IMR-90 (cell line): ENCODE measurements at regions of chr13 and their contacts with region 1.

Region 1: GRCh38 chr13:37741536-37741935 is 128.0 kb downstream of the TRPC4 start:
- DNase-seq: no peak
- ATAC-seq: no peak
- H3K4me3 ChIP-seq: no peak overlapping the region
- H3K27ac ChIP-seq: no peak overlapping the region
- H3K4me1 ChIP-seq: no peaks in the 10 kb centered on the region
- H3K27me3 ChIP-seq: no peaks in the 10 kb centered on the region
- CTCF ChIP-seq: no peak
- POLR2A ChIP-seq: no peak
- RAD21 ChIP-seq: no peak

Region 2: DNA sequence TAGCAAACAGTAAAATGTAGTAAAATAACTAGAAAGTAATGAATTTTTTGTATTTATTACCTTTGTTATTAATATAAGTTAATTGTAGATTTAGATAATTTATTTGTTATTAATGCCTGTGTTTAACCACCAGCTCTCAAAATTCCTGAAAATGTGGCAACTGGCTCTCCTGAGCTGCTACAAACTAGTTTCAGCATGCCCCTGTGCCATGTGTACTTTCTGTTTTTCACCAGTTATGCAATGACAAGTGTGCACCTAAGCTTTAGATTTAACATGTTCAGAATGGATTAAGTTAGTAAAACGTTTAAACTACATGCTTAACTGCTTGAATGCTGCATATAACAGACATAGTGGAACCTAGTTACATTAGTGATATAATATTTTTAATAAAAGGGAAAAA is 231.1 kb before region 1 on chr13:
- CTCF ChIA-PET with region 1: no interaction called
- POLR2A ChIA-PET with region 1: no interaction called
- dilution Hi-C with region 1: no loop called
- in situ Hi-C with region 1: no loop called
- intact Hi-C with region 1: no loop called
- DNase-seq: no peak
- ATAC-seq: no peak
- H3K4me3 ChIP-seq: no peak overlapping the region
- H3K27ac ChIP-seq: no peak overlapping the region
- H3K4me1 ChIP-seq: no peaks in the 10 kb centered on the region
- H3K27me3 ChIP-seq: no peaks in the 10 kb centered on the region
- CTCF ChIP-seq: no peak
- POLR2A ChIP-seq: no peak
- RAD21 ChIP-seq: no peak

Region 3: DNA sequence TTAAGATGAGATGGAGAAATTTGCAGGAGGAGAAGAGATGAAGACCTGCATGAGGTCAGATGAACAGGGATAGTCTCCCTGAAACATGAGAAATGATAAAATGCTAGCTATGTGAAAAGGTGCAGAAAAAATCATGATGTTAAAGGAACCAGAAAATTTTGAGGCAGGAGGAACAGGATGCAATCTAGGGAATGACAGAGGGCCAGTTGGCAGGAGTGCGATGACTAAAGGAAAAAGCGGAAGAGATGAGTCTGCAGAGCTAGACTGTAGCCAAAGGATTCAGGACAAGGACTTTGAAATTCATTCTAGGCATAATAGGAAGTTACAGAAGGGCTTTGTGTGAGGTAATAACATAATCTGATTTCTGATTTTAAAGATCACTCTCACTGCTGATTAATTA is 50.2 kb after region 1 on chr13:
- CTCF ChIA-PET with region 1: no interaction called
- POLR2A ChIA-PET with region 1: no interaction called
- dilution Hi-C with region 1: no loop called
- in situ Hi-C with region 1: no loop called
- intact Hi-C with region 1: loop called (anchors 5 kb)
- DNase-seq: peak; percentile 10
- ATAC-seq: no peak
- H3K4me3 ChIP-seq: no peak overlapping the region
- H3K27ac ChIP-seq: no peak overlapping the region
- H3K4me1 ChIP-seq: no peaks in the 10 kb centered on the region; the same call in 1 of the 2 replicates
- H3K27me3 ChIP-seq: no peaks in the 10 kb centered on the region
- CTCF ChIP-seq: no peak
- POLR2A ChIP-seq: no peak
- RAD21 ChIP-seq: no peak